PC-3 (cell line): ENCODE measurements at regions of chr1 and their contacts with region 1.

Region 1: GRCh38 chr1:154558575-154559465 is at the start of gene UBE2Q1:
- DNase-seq: peak; percentile 97
- ATAC-seq: peak; percentile 90
- H3K4me3 ChIP-seq: peak within 1 kb of the TSS; percentile 80
- H3K27ac ChIP-seq: peak within 1 kb of the TSS; percentile 74
- H3K4me1 ChIP-seq: peaks cover 24% of the 10 kb centered on the region
- H3K27me3 ChIP-seq: no peaks in the 10 kb centered on the region
- CTCF ChIP-seq: no peak
- total RNA-seq, gene UBE2Q1: 40.0 and 66.6 TPM in 2 replicates

Region 2: GRCh38 chr1:153727463-153728304 is 831.1 kb before region 1 on chr1 and contains the start of gene INTS3:
- CTCF ChIA-PET with region 1: no interaction called
- POLR2A ChIA-PET with region 1: interaction called, 11 read pairs
- intact Hi-C with region 1: no loop called
- DNase-seq: peak; percentile 100
- ATAC-seq: peak; percentile 97
- H3K4me3 ChIP-seq: peak within 1 kb of the TSS; percentile 95
- H3K27ac ChIP-seq: peak within 1 kb of the TSS; percentile 85
- H3K4me1 ChIP-seq: peaks cover 33% of the 10 kb centered on the region
- H3K27me3 ChIP-seq: no peaks in the 10 kb centered on the region
- CTCF ChIP-seq: no peak
- total RNA-seq, gene INTS3: 46.5 and 57.4 TPM in 2 replicates

Region 3: DNA sequence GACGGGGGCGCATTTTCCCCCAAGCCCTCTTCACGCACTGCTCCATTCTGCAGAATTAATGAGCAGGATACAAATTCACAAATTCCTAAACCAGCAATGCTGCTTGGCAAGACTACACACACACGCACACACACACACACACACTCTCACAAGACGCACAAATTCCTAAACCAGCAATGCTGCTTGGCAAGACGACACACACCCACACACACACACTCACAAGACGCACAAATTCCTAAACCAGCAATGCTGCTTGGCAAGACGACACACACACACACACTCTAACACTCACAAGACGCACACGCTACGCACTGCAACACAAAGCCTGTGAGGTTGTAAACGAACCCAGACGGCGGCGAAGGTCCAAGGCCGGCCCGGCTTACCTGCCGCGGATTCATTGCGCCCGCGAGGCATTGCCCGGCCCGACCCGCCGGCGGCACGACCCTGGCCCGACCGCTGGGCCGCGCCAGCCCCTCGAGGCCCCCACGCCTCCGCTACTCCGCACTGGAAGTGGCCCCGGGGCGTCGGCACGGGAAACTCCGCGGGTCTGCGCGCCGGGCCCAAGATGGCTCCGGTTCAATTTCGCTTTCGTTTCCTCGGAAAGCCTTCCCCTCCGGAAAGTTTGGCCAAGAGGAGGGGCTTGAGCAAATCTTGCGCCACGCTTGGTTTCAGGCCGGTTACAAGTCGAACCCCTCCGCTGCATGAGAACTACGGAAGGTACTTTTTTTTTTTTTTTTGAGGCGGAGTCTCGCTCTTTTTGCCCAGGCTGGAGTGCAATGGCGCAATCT is 49.0 kb after region 1 on chr1 and contains the start of gene ADAR:
- CTCF ChIA-PET with region 1: no interaction called
- POLR2A ChIA-PET with region 1: no interaction called
- intact Hi-C with region 1: loop called (anchors 1 kb)
- DNase-seq: peak; percentile 95
- ATAC-seq: peak; percentile 68
- H3K4me3 ChIP-seq: peak within 1 kb of the TSS; percentile 97
- H3K27ac ChIP-seq: peak within 1 kb of the TSS; percentile 85
- H3K4me1 ChIP-seq: peaks cover 17% of the 10 kb centered on the region
- H3K27me3 ChIP-seq: no peaks in the 10 kb centered on the region
- CTCF ChIP-seq: 0 out of 2 replicates have a peak, but pooled peaks have one; percentile 13
- total RNA-seq, gene ADAR: 129 and 136 TPM in 2 replicates

Region 4: DNA sequence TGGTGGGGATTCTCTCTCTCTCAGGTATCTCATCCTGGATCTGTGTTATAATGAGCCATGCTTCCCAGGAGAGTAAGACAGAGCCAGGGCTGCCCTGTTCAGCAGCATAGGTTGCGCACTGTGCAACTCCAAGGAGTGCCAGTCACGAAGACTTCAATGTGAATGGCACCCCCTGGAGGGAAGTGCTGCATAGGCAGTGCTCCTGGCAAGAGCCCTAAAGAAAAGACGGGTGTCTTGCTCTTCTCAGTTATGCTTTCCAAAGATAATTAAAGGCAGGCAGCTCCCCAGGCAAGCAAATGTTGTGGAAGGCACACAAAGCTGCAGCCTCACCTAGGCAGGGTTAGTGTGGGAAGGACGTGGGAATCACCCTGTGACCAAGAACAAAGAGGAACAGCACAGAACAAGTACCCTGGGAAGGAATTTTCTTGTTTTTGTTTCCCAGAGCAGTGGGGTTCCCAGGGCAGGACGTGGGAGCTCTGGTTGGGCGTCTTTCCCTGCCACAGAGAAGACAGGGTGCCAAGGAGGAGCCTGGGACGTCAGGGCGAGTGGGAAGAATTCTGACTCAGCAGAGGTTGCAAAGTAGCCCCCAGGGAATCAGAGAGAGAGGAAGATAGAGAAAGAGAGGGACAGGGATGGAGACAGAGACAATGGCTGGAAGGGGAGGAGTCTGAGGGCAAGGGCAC is 190.4 kb after region 1 on chr1:
- CTCF ChIA-PET with region 1: interaction called, 3 read pairs
- POLR2A ChIA-PET with region 1: no interaction called
- intact Hi-C with region 1: loop called (anchors 1 kb)
- DNase-seq: peak; percentile 79
- ATAC-seq: peak; percentile 92
- H3K4me3 ChIP-seq: no peak overlapping the region
- H3K27ac ChIP-seq: no peak overlapping the region
- H3K4me1 ChIP-seq: no peaks in the 10 kb centered on the region
- H3K27me3 ChIP-seq: peaks cover 86% of the 10 kb centered on the region
- CTCF ChIP-seq: peak; percentile 88

Region 5: DNA sequence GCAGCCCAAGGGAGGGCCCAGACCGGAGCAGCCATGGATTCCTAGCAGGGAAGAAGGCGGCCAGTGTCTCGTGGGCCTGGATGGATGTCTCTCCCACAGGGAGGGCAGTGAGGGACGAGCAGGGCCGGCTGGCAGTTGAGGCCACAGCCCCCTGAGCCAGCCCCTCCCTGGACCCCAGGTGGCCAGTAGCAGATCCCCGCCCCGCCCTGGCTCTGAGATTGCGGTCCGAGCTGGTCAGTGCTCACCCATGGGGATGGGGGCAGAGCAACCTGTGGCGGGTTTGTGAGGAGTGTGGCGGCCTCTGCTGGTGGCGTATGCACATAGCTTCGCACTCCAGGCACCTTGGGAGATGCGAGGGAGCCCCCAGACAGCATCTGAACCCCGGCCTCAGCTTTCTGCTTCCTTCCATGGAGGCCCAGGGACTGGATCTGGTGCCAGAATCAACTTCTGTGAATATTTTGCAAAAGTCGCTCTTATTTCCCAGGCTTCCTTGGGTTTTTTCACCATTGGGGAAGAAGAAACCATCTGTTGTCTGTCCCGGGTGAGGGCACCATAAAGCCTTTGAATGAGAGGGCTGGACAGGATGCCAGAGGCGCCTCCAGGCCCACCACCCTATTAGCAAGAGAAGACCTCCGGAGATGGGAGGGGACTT is 319.7 kb after region 1 on chr1:
- CTCF ChIA-PET with region 1: interaction called, 7 read pairs
- POLR2A ChIA-PET with region 1: interaction called, 3 read pairs
- intact Hi-C with region 1: loop called (anchors 2 kb)
- DNase-seq: peak; percentile 80
- ATAC-seq: peak; percentile 93
- H3K4me3 ChIP-seq: no peak overlapping the region
- H3K27ac ChIP-seq: no peak overlapping the region
- H3K4me1 ChIP-seq: peaks cover 9% of the 10 kb centered on the region
- H3K27me3 ChIP-seq: no peaks in the 10 kb centered on the region
- CTCF ChIP-seq: peak; percentile 97

Region 6: DNA sequence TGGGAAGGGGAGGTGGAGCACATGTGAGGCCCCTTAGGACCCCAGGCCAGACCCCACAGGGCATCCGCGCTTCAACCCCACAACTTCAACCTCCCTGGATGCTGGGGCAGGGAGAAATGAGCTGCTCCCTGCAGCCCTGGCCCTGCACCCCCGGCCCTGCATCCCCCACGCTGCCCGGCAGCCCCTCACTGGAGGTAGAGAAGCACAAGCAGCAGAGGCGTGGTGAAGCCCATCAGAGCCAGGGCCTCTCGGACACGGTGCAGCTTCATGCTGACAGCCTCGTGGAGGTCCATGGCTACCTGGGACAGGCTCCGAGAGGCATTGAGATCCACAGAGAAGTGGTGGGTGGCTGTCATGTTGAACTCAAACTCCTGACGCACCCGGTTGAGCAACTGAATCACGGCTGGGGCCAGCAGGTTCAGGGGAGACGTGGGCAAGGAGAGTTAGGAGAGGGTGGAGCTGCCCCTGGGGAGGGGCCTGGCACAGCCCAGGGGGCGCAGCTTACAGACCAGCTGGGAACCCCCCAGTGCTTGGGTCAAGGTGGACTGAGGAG is 471.5 kb after region 1 on chr1:
- CTCF ChIA-PET with region 1: no interaction called
- POLR2A ChIA-PET with region 1: no interaction called
- intact Hi-C with region 1: no loop called
- DNase-seq: no peak
- ATAC-seq: no peak
- H3K4me3 ChIP-seq: no peak overlapping the region
- H3K27ac ChIP-seq: no peak overlapping the region
- H3K4me1 ChIP-seq: peaks cover 7% of the 10 kb centered on the region
- H3K27me3 ChIP-seq: no peaks in the 10 kb centered on the region
- CTCF ChIP-seq: no peak